ENCODE measurements at regions of chr4 and their contacts with region 1.

Region 1: GRCh38 chr4:81471588-81472288 is at the start of gene RASGEF1B:
- DNase-seq: peak; percentile 90 to 98 (median 96)
- H3K4me3 ChIP-seq: peak within 1 kb of the TSS; percentile 92
- H3K4me3 Mint-ChIP-seq: peak within 1 kb of the TSS; percentile 90 to 97 (median 93)
- H3K27ac ChIP-seq: peak within 1 kb of the TSS; percentile 92
- H3K27ac Mint-ChIP-seq: peak within 1 kb of the TSS; percentile 92 to 99 (median 98)
- H3K4me1 ChIP-seq: peaks cover 24% of the 10 kb centered on the region
- H3K4me1 Mint-ChIP-seq: peaks cover 34 to 46% (median 39%) of the 10 kb centered on the region in 3 donors
- H3K27me3 ChIP-seq: no peaks in the 10 kb centered on the region
- H3K27me3 Mint-ChIP-seq: no peaks in the 10 kb centered on the region
- total RNA-seq, gene RASGEF1B: 4.9 to 5.5 TPM

Region 2: GRCh38 chr4:81440949-81441348 is 30.8 kb before region 1 on chr4:
- CTCF ChIA-PET with region 1: no interaction called
- POLR2A ChIA-PET with region 1: no interaction called
- DNase-seq: no peak
- H3K4me3 ChIP-seq: no peak overlapping the region
- H3K4me3 Mint-ChIP-seq: no peak overlapping the region
- H3K27ac ChIP-seq: no peak overlapping the region
- H3K27ac Mint-ChIP-seq: no peak overlapping the region
- H3K4me1 ChIP-seq: no peaks in the 10 kb centered on the region
- H3K4me1 Mint-ChIP-seq: no peaks in the 10 kb centered on the region
- H3K27me3 ChIP-seq: no peaks in the 10 kb centered on the region
- H3K27me3 Mint-ChIP-seq: no peaks in the 10 kb centered on the region

Region 3: DNA sequence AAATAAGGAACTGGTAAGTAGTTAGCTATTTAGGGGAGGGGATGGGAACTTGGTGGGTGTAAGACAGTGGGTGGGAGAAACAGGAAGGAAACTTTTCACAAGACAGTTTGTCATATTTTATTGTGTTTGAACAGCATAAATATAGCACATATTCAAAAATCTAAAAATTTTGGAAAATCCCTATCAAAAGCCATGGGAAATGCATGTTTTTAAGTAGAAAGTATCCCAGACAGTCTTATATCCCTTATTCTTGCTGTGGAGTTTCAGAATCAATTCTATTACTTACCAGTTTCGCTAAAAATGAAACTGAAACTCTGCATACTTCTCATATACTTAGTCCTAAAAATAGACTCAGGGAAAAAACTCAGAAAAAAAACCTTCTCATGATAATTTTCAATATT is 22.3 kb after region 1 on chr4:
- CTCF ChIA-PET with region 1: interaction called, 24 read pairs
- POLR2A ChIA-PET with region 1: interaction called, 37 read pairs
- DNase-seq: peak in 1 of 5 donors; percentile 30
- H3K4me3 ChIP-seq: peak overlapping the region; percentile 50
- H3K4me3 Mint-ChIP-seq: peak overlapping the region; percentile 67 to 81 (median 77)
- H3K27ac ChIP-seq: no peak overlapping the region
- H3K27ac Mint-ChIP-seq: peak overlapping the region; percentile 22 to 97 (median 92)
- H3K4me1 ChIP-seq: peaks cover 45% of the 10 kb centered on the region
- H3K4me1 Mint-ChIP-seq: peaks cover 45 to 58% (median 53%) of the 10 kb centered on the region in 3 donors
- H3K27me3 ChIP-seq: no peaks in the 10 kb centered on the region
- H3K27me3 Mint-ChIP-seq: no peaks in the 10 kb centered on the region

Region 4: GRCh38 chr4:81688085-81688484 is 216.3 kb after region 1 on chr4:
- CTCF ChIA-PET with region 1: interaction called, 19 read pairs
- POLR2A ChIA-PET with region 1: interaction called, 3 read pairs
- DNase-seq: peak in 2 of 5 donors; percentile 1 to 4
- H3K4me3 ChIP-seq: no peak overlapping the region
- H3K4me3 Mint-ChIP-seq: no peak overlapping the region
- H3K27ac ChIP-seq: no peak overlapping the region
- H3K27ac Mint-ChIP-seq: no peak overlapping the region
- H3K4me1 ChIP-seq: no peaks in the 10 kb centered on the region
- H3K4me1 Mint-ChIP-seq: no peaks in the 10 kb centered on the region
- H3K27me3 ChIP-seq: no peaks in the 10 kb centered on the region
- H3K27me3 Mint-ChIP-seq: peaks cover 4 to 20% of the 10 kb centered on the region in 2 donors

Region 5: DNA sequence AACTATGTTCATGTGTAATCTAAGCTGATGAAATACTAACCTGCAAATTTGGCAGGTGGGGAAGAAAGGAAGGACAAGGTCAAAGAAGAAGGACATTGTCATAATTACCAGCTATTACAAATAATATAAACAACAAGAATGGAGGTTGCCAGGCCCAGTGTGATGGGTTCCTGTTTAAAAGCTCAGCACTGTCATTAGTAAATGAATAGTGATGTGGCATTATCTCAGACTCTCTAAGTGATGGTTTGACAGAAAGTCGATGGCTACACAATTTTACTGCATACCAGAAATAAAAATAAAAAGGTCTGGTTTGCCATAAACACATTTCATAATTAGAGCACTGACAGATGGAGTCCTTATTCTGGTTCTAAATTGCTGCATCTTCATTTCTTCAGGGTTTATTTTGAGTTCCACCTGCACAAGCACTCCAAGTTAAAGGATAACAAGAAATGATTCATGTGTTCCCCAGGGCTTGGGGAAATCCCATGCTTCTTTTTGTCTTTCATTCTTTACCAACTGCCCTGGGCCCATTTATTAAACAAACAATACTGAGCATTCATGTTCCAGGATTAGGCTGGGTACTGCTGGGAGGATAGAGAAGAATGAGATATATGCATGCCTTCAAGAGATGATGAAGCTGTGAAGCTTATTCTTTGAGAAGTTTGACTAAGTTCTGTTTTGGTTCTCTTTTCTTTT is 367.8 kb after region 1 on chr4:
- CTCF ChIA-PET with region 1: interaction called, 143 read pairs
- POLR2A ChIA-PET with region 1: no interaction called
- DNase-seq: no peak
- H3K4me3 ChIP-seq: no peak overlapping the region
- H3K4me3 Mint-ChIP-seq: no peak overlapping the region
- H3K27ac ChIP-seq: no peak overlapping the region
- H3K27ac Mint-ChIP-seq: peak overlapping the region in 1 of 8 donors; percentile 72
- H3K4me1 ChIP-seq: no peaks in the 10 kb centered on the region
- H3K4me1 Mint-ChIP-seq: no peaks in the 10 kb centered on the region
- H3K27me3 ChIP-seq: no peaks in the 10 kb centered on the region
- H3K27me3 Mint-ChIP-seq: no peaks in the 10 kb centered on the region

Region 6: GRCh38 chr4:81844717-81845116 is 373.0 kb after region 1 on chr4:
- CTCF ChIA-PET with region 1: interaction called, 143 read pairs
- POLR2A ChIA-PET with region 1: interaction called, 3 read pairs
- DNase-seq: peak; percentile 35 to 78 (median 58)
- H3K4me3 ChIP-seq: no peak overlapping the region
- H3K4me3 Mint-ChIP-seq: no peak overlapping the region
- H3K27ac ChIP-seq: no peak overlapping the region
- H3K27ac Mint-ChIP-seq: no peak overlapping the region
- H3K4me1 ChIP-seq: no peaks in the 10 kb centered on the region
- H3K4me1 Mint-ChIP-seq: no peaks in the 10 kb centered on the region
- H3K27me3 ChIP-seq: no peaks in the 10 kb centered on the region
- H3K27me3 Mint-ChIP-seq: peaks cover 0 to 3% of the 10 kb centered on the region in 2 donors